Dorsolateral prefrontal cortex (tissue), 120 donors: ENCODE measurements at regions of chr12 and their contacts with region 1.

Region 1: GRCh38 chr12:58593557-58594304 is 326.6 kb downstream of the LRIG3 start:
- DNase-seq: no peak
- H3K4me3 ChIP-seq: no peak overlapping the region
- H3K27ac ChIP-seq: no peak overlapping the region
- H3K27me3 ChIP-seq: no peaks in the 10 kb centered on the region
- CTCF ChIP-seq: no peak

Region 2: GRCh38 chr12:58629376-58629775 is 35.6 kb after region 1 on chr12:
- intact Hi-C with region 1: loop called in 1 of 2 experiments (anchors 2 kb)
- DNase-seq: no peak
- H3K4me3 ChIP-seq: no peak overlapping the region
- H3K27ac ChIP-seq: no peak overlapping the region
- H3K27me3 ChIP-seq: no peaks in the 10 kb centered on the region
- CTCF ChIP-seq: no peak